Activated T-helper 1 cell treated with anti-CD3 and anti-CD28 coated beads, Interleukin-12 subunit alpha, Interleukin-12 subunit beta, Interleukin-2, Interleukin-4 antibody, amounts not matched to agents 30 ng/mL and 10 ng/mL and 1 ng/mL, durations not matched to agents 14 hours and 24 hours and 36 hours (primary cell): ENCODE measurements at regions of chr7 and their contacts with region 1.

Region 1: DNA sequence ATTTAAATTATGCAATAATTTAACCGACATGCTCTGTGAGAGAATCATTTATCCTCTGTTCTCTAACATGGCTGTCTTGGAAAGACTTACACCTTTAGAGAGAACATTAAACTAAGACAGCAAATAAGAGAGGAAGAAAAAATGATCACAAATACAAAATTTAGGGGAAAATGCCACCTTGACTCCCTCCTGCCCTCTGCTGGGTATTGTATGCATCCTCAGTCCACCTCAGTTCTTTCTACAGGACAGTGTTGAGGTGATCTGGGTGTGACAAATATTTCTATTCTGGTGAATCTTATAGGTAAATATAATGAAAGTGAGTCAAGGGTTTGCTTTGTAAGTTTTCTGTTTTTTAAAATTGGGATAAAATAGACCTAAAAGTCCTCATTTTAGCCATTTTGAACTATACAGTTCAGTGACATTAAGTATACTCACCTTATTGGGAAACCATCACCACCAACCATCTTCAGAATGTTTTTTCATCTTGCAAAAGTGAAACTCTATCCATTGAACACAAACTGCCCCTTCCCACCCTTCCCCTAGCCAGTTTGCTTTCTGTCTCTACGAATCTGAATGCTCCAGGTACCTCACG is 61.5 kb upstream of the ELMO1 start:
- DNase-seq: no peak
- H3K4me3 Mint-ChIP-seq: no peak overlapping the region
- H3K27ac Mint-ChIP-seq: no peak overlapping the region
- H3K4me1 Mint-ChIP-seq: no peaks in the 10 kb centered on the region
- H3K27me3 Mint-ChIP-seq: peaks cover 19% of the 10 kb centered on the region

Region 2: GRCh38 chr7:36583318-36583717 is 926.8 kb before region 1 on chr7:
- intact Hi-C with region 1: loop called (anchors 5 kb)
- DNase-seq: no peak
- H3K4me3 Mint-ChIP-seq: no peak overlapping the region
- H3K27ac Mint-ChIP-seq: no peak overlapping the region
- H3K4me1 Mint-ChIP-seq: peaks cover 12% of the 10 kb centered on the region
- H3K27me3 Mint-ChIP-seq: peaks cover 1% of the 10 kb centered on the region

Region 3: DNA sequence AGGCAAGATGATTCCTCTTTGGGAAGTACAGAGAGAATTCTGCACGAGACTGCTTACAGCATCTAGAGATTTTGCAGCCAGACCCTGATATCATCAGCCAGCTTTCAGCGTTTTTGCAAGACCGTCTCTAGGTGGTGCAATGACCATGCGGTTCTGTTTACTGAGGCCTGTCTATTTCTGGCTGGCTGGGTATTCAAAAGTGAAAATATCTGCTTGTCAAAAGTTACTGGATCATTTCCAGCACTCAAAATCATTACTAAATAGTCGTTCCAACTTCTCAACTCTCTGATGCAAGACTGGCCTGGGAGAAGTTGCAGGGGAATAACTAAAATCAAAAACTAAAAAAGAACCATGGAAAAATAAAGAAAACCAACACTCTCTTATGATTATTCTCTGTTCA is 301.6 kb before region 1 on chr7:
- intact Hi-C with region 1: loop called (anchors 1 kb)
- DNase-seq: no peak
- H3K4me3 Mint-ChIP-seq: no peak overlapping the region
- H3K27ac Mint-ChIP-seq: no peak overlapping the region
- H3K4me1 Mint-ChIP-seq: peaks cover 15% of the 10 kb centered on the region
- H3K27me3 Mint-ChIP-seq: no peaks in the 10 kb centered on the region

Region 4: GRCh38 chr7:37234928-37235327 is 275.2 kb before region 1 on chr7:
- intact Hi-C with region 1: loop called (anchors 2 kb)
- DNase-seq: no peak
- H3K4me3 Mint-ChIP-seq: no peak overlapping the region
- H3K27ac Mint-ChIP-seq: no peak overlapping the region
- H3K4me1 Mint-ChIP-seq: peaks cover 11% of the 10 kb centered on the region
- H3K27me3 Mint-ChIP-seq: no peaks in the 10 kb centered on the region